Activated CD8-positive, alpha-beta T cell treated with anti-CD3 and anti-CD28 coated beads for 36 hours (primary cell): ENCODE measurements at regions of chr18 and their contacts with region 1.

Region 1: DNA sequence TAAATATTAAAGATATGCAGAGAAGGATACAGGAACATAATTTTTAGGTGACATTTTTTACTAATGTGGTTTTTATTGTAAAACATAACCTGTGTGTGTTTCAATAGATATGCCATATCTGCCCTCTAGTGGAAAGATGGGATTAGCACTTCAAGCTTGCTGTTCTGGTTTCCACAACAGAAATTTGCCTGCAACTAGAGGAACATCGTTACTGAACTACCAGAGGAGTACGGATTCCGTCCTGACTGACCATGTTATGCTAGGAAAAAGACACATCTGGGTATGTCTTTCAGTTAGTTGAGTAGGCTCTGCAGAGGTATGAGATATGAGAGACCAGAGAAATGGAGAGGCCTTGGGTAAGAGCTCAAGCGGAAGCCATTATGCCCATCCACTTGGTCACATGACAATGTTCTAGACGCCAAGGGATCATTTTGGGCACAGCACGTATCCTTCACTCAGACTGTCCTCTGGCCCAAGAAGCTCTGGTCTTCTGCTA is 104.9 kb downstream of the MBD2 start:
- DNase-seq: peak; percentile 27
- ATAC-seq: peak; percentile 78
- H3K4me3 Mint-ChIP-seq: peak overlapping the region; percentile 50
- H3K27ac Mint-ChIP-seq: peak overlapping the region; percentile 41
- H3K4me1 Mint-ChIP-seq: peaks cover 3% of the 10 kb centered on the region
- H3K27me3 Mint-ChIP-seq: peaks cover 12% of the 10 kb centered on the region
- CTCF ChIP-seq: peak; percentile 86

Region 2: DNA sequence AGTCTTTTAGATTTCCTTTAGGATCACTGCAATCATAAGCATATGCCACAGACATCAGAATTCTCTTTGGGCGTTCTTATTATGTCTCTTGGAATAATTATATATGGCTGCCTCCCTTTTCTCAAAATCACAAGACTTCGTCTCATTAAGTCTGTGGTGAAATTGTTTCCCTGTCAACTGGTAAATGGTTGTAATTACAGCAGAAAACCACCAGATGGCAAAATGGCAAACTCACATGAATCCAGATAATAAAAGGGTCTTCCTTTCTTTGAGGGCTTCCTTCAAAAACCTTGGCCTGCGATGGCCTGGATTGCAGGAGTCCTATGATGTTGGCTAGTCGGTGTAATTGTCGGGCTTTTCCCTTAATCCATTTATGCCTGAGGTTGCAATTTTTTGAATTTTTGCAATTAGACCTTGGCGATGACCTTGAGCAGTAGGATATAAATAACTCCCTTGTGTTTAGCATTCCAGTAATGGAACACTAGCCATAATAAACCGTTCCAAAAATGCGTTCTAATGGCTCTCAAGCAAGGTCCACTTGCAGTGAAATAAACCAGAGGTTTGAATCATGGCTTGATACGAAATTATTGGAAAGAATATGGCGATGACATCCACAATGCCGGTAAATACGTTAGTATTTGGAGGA is 551.5 kb before region 1 on chr18:
- CTCF ChIA-PET with region 1: interaction called, 10 read pairs
- POLR2A ChIA-PET with region 1: no interaction called
- intact Hi-C with region 1: loop called (anchors 2 kb)
- DNase-seq: peak; percentile 1
- ATAC-seq: no peak
- H3K4me3 Mint-ChIP-seq: no peak overlapping the region
- H3K27ac Mint-ChIP-seq: no peak overlapping the region
- H3K4me1 Mint-ChIP-seq: no peaks in the 10 kb centered on the region
- H3K27me3 Mint-ChIP-seq: no peaks in the 10 kb centered on the region
- CTCF ChIP-seq: peak; percentile 61

Region 3: GRCh38 chr18:53909668-53910067 is 209.9 kb before region 1 on chr18:
- CTCF ChIA-PET with region 1: interaction called, 27 read pairs
- POLR2A ChIA-PET with region 1: no interaction called
- intact Hi-C with region 1: loop called (anchors 5 kb)
- DNase-seq: peak; percentile 49
- ATAC-seq: no peak
- H3K4me3 Mint-ChIP-seq: no peak overlapping the region
- H3K27ac Mint-ChIP-seq: no peak overlapping the region
- H3K4me1 Mint-ChIP-seq: no peaks in the 10 kb centered on the region
- H3K27me3 Mint-ChIP-seq: peaks cover 2% of the 10 kb centered on the region
- CTCF ChIP-seq: peak; percentile 60

Region 4: GRCh38 chr18:54043484-54044251 is 75.9 kb before region 1 on chr18:
- CTCF ChIA-PET with region 1: interaction called, 3 read pairs
- POLR2A ChIA-PET with region 1: no interaction called
- intact Hi-C with region 1: loop called (anchors 2 kb)
- DNase-seq: no peak
- ATAC-seq: no peak
- H3K4me3 Mint-ChIP-seq: no peak overlapping the region
- H3K27ac Mint-ChIP-seq: no peak overlapping the region
- H3K4me1 Mint-ChIP-seq: no peaks in the 10 kb centered on the region
- H3K27me3 Mint-ChIP-seq: peaks cover 9% of the 10 kb centered on the region
- CTCF ChIP-seq: no peak